B cell (primary cell): ENCODE measurements at regions of chr12 and their contacts with region 1.

Region 1: GRCh38 chr12:32178341-32179010 is 71.8 kb downstream of the BICD1 start:
- DNase-seq: no peak
- ATAC-seq: no peak
- H3K4me3 ChIP-seq: no peak overlapping the region
- H3K4me3 Mint-ChIP-seq: no peak overlapping the region
- H3K27ac ChIP-seq: no peak overlapping the region
- H3K27ac Mint-ChIP-seq: no peak overlapping the region
- H3K4me1 ChIP-seq: no peaks in the 10 kb centered on the region
- H3K4me1 Mint-ChIP-seq: no peaks in the 10 kb centered on the region
- H3K27me3 ChIP-seq: no peaks in the 10 kb centered on the region
- H3K27me3 Mint-ChIP-seq: no peaks in the 10 kb centered on the region
- CTCF ChIP-seq: no peak

Region 2: DNA sequence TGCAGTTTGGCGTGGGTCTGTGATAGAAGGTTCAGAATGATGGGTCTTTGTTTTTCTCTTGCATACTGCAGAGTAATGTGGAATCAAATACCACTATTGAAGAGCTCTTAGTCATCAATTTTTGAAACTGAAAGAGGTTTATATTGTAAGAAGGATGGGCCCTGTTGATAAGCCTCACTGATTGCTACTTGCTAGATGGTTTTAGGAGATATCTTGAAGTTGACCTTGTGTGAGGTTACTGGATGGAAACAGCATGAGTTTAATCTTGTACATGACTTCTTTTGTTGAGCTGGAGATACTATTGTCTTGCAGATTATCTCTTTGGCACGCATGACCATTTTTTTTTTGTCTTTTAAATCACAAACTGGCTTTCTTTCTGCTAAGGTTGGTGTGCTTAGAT is 58.1 kb before region 1 on chr12:
- CTCF ChIA-PET with region 1: no interaction called
- POLR2A ChIA-PET with region 1: no interaction called
- intact Hi-C with region 1: loop called (anchors 10 kb)
- DNase-seq: no peak
- ATAC-seq: no peak
- H3K4me3 ChIP-seq: no peak overlapping the region
- H3K4me3 Mint-ChIP-seq: no peak overlapping the region
- H3K27ac ChIP-seq: no peak overlapping the region
- H3K27ac Mint-ChIP-seq: peak overlapping the region; percentile 37
- H3K4me1 ChIP-seq: no peaks in the 10 kb centered on the region
- H3K4me1 Mint-ChIP-seq: peaks cover 29% of the 10 kb centered on the region
- H3K27me3 ChIP-seq: no peaks in the 10 kb centered on the region
- H3K27me3 Mint-ChIP-seq: no peaks in the 10 kb centered on the region
- CTCF ChIP-seq: no peak